B cell (primary cell): ENCODE measurements at regions of chr19 and their contacts with region 1.

Region 1: GRCh38 chr19:54674021-54674617 is 11.3 kb downstream of the LILRB4 start:
- DNase-seq: peak; percentile 46
- ATAC-seq: no peak
- H3K4me3 ChIP-seq: no peak overlapping the region
- H3K4me3 Mint-ChIP-seq: no peak overlapping the region
- H3K27ac ChIP-seq: no peak overlapping the region
- H3K27ac Mint-ChIP-seq: no peak overlapping the region
- H3K4me1 ChIP-seq: no peaks in the 10 kb centered on the region
- H3K4me1 Mint-ChIP-seq: no peaks in the 10 kb centered on the region
- H3K27me3 ChIP-seq: peaks cover 0 to 16% (median 0%) of the 10 kb centered on the region in 4 experiments
- H3K27me3 Mint-ChIP-seq: peaks cover 18% of the 10 kb centered on the region
- CTCF ChIP-seq: peak; percentile 73

Region 2: DNA sequence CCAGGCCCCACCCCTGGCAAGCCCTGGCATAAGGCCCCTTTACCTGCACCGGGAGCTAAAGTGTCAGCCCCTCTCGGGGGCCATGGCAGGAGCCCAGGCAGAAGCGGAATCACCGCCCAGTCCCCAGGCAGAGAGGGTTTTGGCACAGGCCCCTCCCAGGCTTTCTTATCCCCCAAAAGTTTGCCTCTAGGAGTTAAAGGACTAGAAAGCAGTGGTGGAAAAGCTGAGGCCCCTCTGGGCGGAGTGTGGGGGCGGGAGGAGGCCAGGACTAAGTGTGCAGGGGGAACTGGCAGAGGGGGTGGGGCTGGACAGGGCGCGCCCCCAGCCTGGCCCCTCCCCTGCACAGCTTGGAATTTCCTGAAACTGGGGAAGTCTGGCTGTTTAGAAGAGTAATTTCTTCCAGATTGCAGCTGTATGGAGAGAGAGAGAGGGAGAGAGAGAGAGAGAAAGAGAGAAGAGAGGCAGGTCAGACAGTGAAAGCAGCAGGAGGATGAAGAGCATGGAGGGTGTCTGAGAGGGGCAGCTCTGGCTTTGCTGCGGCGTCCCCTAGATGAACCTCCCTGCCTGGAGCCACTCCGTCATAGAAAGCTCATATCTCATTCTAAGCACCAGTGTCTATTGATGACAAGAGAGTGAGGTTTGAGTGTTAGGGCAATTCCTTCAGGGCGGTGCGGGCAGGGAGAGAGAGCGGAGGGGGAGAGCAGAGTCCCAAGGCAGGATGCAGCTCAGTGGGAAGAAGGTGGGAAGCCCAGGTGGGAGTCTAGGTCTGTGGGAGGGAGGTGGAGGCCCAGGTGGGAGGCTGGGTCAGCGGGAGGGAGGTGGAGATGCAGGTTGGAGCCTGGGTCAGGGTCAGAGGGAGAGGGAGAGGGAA is 200.9 kb before region 1 on chr19 and contains the start of gene CDC42EP5:
- CTCF ChIA-PET with region 1: interaction called, 246 read pairs
- POLR2A ChIA-PET with region 1: no interaction called
- intact Hi-C with region 1: no loop called
- DNase-seq: no peak
- ATAC-seq: peak; percentile 31
- H3K4me3 ChIP-seq: no peak within 1 kb of the TSS
- H3K4me3 Mint-ChIP-seq: no peak within 1 kb of the TSS
- H3K27ac ChIP-seq: no peak within 1 kb of the TSS
- H3K27ac Mint-ChIP-seq: no peak within 1 kb of the TSS
- H3K4me1 ChIP-seq: peaks cover 12 to 16% of the 10 kb centered on the region in 2 donors
- H3K4me1 Mint-ChIP-seq: peaks cover 11% of the 10 kb centered on the region
- H3K27me3 ChIP-seq: peaks cover 0 to 43% (median 19%) of the 10 kb centered on the region in 4 experiments
- H3K27me3 Mint-ChIP-seq: peaks cover 45% of the 10 kb centered on the region
- CTCF ChIP-seq: no peak
- total RNA-seq, gene CDC42EP5: not detected in 2 replicates

Region 3: GRCh38 chr19:54481322-54481930 is 192.7 kb before region 1 on chr19:
- CTCF ChIA-PET with region 1: interaction called, 246 read pairs
- POLR2A ChIA-PET with region 1: no interaction called
- intact Hi-C with region 1: loop called (anchors 1 kb)
- DNase-seq: peak; percentile 80
- ATAC-seq: peak; percentile 62
- H3K4me3 ChIP-seq: no peak overlapping the region
- H3K4me3 Mint-ChIP-seq: peak overlapping the region; percentile 42
- H3K27ac ChIP-seq: no peak overlapping the region
- H3K27ac Mint-ChIP-seq: peak overlapping the region; percentile 38
- H3K4me1 ChIP-seq: peaks cover 15 to 24% of the 10 kb centered on the region in 2 donors
- H3K4me1 Mint-ChIP-seq: peaks cover 20% of the 10 kb centered on the region
- H3K27me3 ChIP-seq: peaks cover 0 to 21% (median 9%) of the 10 kb centered on the region in 4 experiments
- H3K27me3 Mint-ChIP-seq: peaks cover 45% of the 10 kb centered on the region
- CTCF ChIP-seq: peak; percentile 84

Region 4: DNA sequence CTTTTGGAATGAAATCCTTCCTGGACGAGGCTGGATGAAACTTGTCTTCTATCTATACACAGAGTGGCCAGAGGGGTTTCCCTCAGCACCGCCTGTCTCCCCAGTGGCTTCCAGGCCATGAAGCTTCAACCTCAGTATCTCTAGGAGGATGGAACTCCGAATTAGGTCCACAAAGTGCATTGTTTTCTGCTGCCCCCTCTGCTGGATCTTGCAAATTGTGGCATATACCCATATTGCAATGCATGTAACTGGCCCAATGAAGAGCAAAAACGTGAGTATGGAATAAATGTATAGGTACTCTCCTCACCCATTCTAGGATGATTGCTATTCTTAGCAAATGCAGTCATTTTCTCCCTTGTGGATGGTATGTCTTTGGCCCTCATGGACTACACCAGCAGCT is 26.0 kb before region 1 on chr19:
- CTCF ChIA-PET with region 1: interaction called, 97 read pairs
- POLR2A ChIA-PET with region 1: no interaction called
- intact Hi-C with region 1: loop called (anchors 1 kb)
- DNase-seq: no peak
- ATAC-seq: no peak
- H3K4me3 ChIP-seq: no peak overlapping the region
- H3K4me3 Mint-ChIP-seq: no peak overlapping the region
- H3K27ac ChIP-seq: no peak overlapping the region
- H3K27ac Mint-ChIP-seq: no peak overlapping the region
- H3K4me1 ChIP-seq: peaks cover 4% of the 10 kb centered on the region in 2 donors
- H3K4me1 Mint-ChIP-seq: peaks cover 4% of the 10 kb centered on the region
- H3K27me3 ChIP-seq: no peaks in the 10 kb centered on the region
- H3K27me3 Mint-ChIP-seq: peaks cover under 1% of the 10 kb centered on the region
- CTCF ChIP-seq: no peak

Region 5: GRCh38 chr19:54653181-54653809 is 20.8 kb before region 1 on chr19:
- CTCF ChIA-PET with region 1: interaction called, 97 read pairs
- POLR2A ChIA-PET with region 1: no interaction called
- intact Hi-C with region 1: loop called (anchors 1 kb)
- DNase-seq: peak; percentile 62
- ATAC-seq: peak; percentile 36
- H3K4me3 ChIP-seq: no peak overlapping the region
- H3K4me3 Mint-ChIP-seq: no peak overlapping the region
- H3K27ac ChIP-seq: no peak overlapping the region
- H3K27ac Mint-ChIP-seq: no peak overlapping the region
- H3K4me1 ChIP-seq: peaks cover 3% of the 10 kb centered on the region in 2 donors
- H3K4me1 Mint-ChIP-seq: peaks cover 9% of the 10 kb centered on the region
- H3K27me3 ChIP-seq: no peaks in the 10 kb centered on the region
- H3K27me3 Mint-ChIP-seq: no peaks in the 10 kb centered on the region
- CTCF ChIP-seq: peak; percentile 89

Region 6: DNA sequence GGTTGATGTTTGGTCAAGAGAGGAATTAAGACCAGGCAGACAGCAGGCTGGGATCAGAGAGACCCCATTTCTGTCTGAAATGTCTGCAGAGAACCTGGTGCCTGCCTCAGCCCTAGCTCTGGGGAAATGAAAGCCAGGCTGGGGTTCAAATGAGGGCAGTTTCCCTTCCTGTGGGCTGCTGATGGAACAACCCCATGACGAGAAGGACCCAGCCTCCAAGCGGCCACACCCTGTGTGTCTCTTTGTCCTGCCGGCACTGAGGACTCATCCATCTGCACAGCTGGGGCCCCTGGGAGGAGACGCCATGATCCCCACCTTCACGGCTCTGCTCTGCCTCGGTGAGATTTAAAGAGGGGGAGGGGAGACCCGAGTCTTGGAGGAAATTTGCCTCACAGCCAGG is 11.4 kb before region 1 on chr19 and contains the start of gene LILRB4:
- CTCF ChIA-PET with region 1: interaction called, 13 read pairs
- POLR2A ChIA-PET with region 1: no interaction called
- intact Hi-C with region 1: no loop called
- DNase-seq: no peak
- ATAC-seq: no peak
- H3K4me3 ChIP-seq: peak within 1 kb of the TSS in 1 of 5 experiments; percentile 43
- H3K4me3 Mint-ChIP-seq: peak within 1 kb of the TSS; percentile 66
- H3K27ac ChIP-seq: no peak within 1 kb of the TSS
- H3K27ac Mint-ChIP-seq: no peak within 1 kb of the TSS
- H3K4me1 ChIP-seq: peaks cover 27 to 39% of the 10 kb centered on the region in 2 donors
- H3K4me1 Mint-ChIP-seq: peaks cover 29% of the 10 kb centered on the region
- H3K27me3 ChIP-seq: peaks cover 0 to 11% (median 3%) of the 10 kb centered on the region in 4 experiments
- H3K27me3 Mint-ChIP-seq: peaks cover 11% of the 10 kb centered on the region
- CTCF ChIP-seq: no peak
- total RNA-seq, gene LILRB4: 0.61 and 1.1 TPM in 2 replicates

Region 7: GRCh38 chr19:54740134-54740497 is 66.0 kb after region 1 on chr19:
- CTCF ChIA-PET with region 1: no interaction called
- POLR2A ChIA-PET with region 1: no interaction called
- intact Hi-C with region 1: no loop called
- DNase-seq: no peak
- ATAC-seq: no peak
- H3K4me3 ChIP-seq: no peak overlapping the region
- H3K4me3 Mint-ChIP-seq: no peak overlapping the region
- H3K27ac ChIP-seq: no peak overlapping the region
- H3K27ac Mint-ChIP-seq: no peak overlapping the region
- H3K4me1 ChIP-seq: no peaks in the 10 kb centered on the region
- H3K4me1 Mint-ChIP-seq: no peaks in the 10 kb centered on the region
- H3K27me3 ChIP-seq: no peaks in the 10 kb centered on the region
- H3K27me3 Mint-ChIP-seq: peaks cover 27% of the 10 kb centered on the region
- CTCF ChIP-seq: no peak